ENCODE measurements at regions of chr1 and their contacts with region 1.

Region 1: DNA sequence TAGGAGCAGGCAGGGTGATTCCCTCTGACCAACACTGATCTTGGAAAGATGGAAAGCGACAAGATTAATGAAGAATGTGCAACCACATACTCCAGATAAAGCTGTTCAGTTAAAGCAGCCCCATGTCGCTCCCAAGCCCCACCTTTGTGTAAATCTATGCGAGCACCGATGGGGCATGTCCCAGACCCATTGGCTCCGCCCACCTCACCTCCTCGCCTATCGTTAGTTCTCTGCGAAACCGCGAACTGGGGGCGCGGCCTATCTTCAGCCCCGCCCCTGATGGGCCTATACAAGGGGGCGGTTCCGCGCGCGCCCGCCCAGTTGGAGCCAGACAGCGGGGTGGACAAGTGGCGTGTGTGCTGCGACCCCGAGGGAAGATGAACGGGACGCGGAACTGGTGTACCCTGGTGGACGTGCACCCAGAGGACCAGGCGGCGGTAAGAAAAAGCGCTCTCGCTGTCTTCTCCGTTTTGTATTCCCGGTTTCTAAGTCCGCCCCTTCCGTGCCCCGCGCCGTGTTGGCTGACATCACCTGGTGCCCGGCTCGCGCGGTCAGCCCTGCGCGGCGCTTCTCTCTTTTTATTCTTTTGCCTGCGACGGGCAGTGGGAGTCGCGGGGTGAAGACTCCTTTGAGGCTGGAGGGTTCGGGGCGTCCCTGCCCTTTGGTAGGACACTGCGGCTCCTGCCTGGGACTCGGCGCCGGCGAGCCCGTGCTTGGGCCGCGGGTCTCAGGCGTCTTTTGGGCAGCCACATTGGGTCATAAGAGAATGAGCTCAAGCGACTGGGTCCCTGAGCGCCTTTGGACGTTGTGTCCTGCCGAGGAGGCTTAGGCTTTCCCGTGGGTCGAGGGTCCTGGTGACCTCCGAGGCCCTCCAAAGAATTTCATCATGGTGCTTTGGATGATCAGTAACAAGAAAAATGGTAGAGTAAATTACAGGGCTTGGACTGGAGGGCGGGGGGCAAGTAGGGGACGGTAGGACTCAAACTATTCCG is at the start of gene TUFT1:
- H3K4me3 ChIP-seq: peak within 1 kb of the TSS; percentile 84
- H3K27ac ChIP-seq: peak within 1 kb of the TSS; percentile 74
- H3K4me1 ChIP-seq: peaks cover 12% of the 10 kb centered on the region; the same call in 1 of the 2 replicates
- CTCF ChIP-seq: peak; percentile 49; the same call in 1 of the 2 replicates

Region 2: GRCh38 chr1:151372061-151372934 is 168.0 kb before region 1 on chr1 and contains the start of gene SELENBP1:
- CTCF ChIA-PET with region 1: no interaction called
- POLR2A ChIA-PET with region 1: no interaction called
- H3K4me3 ChIP-seq: no peak within 1 kb of the TSS
- H3K27ac ChIP-seq: peak within 1 kb of the TSS; percentile 64
- H3K4me1 ChIP-seq: peaks cover 12% of the 10 kb centered on the region
- CTCF ChIP-seq: no peak; the same call in 1 of the 2 replicates

Region 3: DNA sequence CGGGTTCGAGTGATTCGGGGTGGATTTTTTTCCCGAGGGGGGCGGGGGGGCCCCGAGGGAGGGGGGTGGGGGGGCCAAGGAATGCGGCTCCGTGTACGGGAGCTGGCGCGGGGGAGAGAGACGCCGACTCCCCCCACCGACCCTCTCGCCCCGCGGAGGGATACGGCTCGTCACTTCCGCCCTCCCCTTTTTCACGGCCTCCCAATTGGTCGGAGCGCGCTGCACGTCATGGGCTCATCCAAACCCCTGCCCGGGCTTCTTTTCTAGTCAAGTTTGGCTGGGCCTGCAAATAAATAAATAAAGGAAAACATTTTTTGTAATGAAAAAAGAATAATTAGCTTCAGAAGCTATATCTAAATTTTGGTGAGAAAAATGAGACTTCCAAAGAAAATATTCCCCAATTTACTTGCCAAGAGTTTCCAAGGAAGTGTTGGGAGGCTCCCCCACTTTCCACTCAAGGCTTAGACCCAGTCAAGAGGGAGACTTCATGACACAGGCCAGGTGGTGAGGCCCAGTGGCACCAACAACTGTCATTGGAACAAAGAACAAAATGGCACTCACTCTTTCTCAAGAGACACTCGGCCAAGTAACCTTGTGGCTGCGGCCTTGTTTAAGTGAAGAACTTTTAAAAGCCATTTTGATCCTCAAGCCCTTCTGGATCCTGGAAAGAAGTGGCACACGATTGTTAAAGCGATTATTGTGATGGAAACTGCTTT is 80.8 kb before region 1 on chr1 and contains the start of gene POGZ:
- CTCF ChIA-PET with region 1: interaction called, 3 read pairs
- POLR2A ChIA-PET with region 1: interaction called, 21 read pairs
- H3K4me3 ChIP-seq: peak within 1 kb of the TSS; percentile 84
- H3K27ac ChIP-seq: peak within 1 kb of the TSS; percentile 77
- H3K4me1 ChIP-seq: 0 out of 2 replicates have a peak, but pooled peaks cover 2% of the 10 kb centered on the region
- CTCF ChIP-seq: no peak

Region 4: GRCh38 chr1:151494741-151495281 is 45.5 kb before region 1 on chr1:
- CTCF ChIA-PET with region 1: interaction called, 3 read pairs
- POLR2A ChIA-PET with region 1: interaction called, 28 read pairs
- H3K4me3 ChIP-seq: no peak overlapping the region
- H3K27ac ChIP-seq: no peak overlapping the region
- H3K4me1 ChIP-seq: peaks cover 9% of the 10 kb centered on the region; the same call in 1 of the 2 replicates
- CTCF ChIP-seq: no peak

Region 5: DNA sequence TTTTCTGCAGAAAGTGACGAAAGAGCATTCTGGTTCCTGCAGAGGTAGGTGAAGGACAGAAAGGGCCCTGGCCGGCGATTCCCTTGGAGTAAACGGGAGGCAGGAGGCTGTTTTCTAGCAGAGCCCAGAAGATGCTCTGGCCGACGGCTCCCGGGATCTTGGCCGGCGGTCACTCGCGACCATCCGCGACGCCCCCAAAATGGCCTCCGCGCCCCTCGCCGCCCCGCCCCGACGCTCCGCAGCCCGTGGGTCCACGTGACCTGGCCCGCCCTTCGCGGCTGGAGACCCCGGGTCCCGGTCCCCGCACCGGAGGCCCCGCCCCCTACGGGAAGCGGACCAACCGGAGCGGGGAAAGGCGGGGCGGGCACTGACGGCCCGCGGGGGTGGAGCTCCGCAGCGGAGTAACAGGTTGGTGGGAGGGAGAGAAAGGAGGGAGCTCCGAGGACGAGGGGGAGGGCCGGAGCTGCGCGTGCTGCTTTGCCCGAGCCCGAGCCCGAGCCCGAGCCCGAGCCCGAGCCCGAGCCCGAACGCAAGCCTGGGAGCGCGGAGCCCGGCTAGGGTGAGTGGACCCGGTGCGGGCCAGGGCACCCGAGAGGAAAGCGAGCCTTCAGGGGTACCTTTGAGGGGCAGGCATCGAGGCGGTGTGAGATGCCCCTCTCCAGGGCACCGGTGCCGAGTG is 29.2 kb before region 1 on chr1 and contains the start of gene CGN:
- CTCF ChIA-PET with region 1: interaction called, 5 read pairs
- POLR2A ChIA-PET with region 1: interaction called, 17 read pairs
- H3K4me3 ChIP-seq: peak within 1 kb of the TSS; percentile 64
- H3K27ac ChIP-seq: peak within 1 kb of the TSS; percentile 75; the same call in 1 of the 2 replicates
- H3K4me1 ChIP-seq: peaks cover 16% of the 10 kb centered on the region
- CTCF ChIP-seq: no peak

Region 6: GRCh38 chr1:151739590-151740375 is 199.5 kb after region 1 on chr1:
- CTCF ChIA-PET with region 1: interaction called, 13 read pairs
- POLR2A ChIA-PET with region 1: interaction called, 6 read pairs
- H3K4me3 ChIP-seq: no peak overlapping the region
- H3K27ac ChIP-seq: no peak overlapping the region
- H3K4me1 ChIP-seq: no peaks in the 10 kb centered on the region
- CTCF ChIP-seq: no peak

Measured in HEK293 (cell line).